Pancreas (tissue), 10 donors: ENCODE measurements at regions of chr1 and their contacts with region 1.

Region 1: GRCh38 chr1:200279810-200280411 is 129.9 kb downstream of the ZNF281 start:
- DNase-seq: peak in 5 of 6 donors; percentile 52 to 68 (median 63)
- ATAC-seq: peak; percentile 79 to 89 (median 82)
- H3K4me3 ChIP-seq: no peak overlapping the region
- H3K27ac ChIP-seq: no peak overlapping the region
- H3K4me1 ChIP-seq: peaks cover 0 to 11% (median 4%) of the 10 kb centered on the region in 3 donors
- H3K27me3 ChIP-seq: no peaks in the 10 kb centered on the region
- CTCF ChIP-seq: peak; percentile 56 to 75 (median 66)

Region 2: GRCh38 chr1:200493344-200493743 is 213.4 kb after region 1 on chr1:
- intact Hi-C with region 1: loop called in 1 of 3 experiments (anchors 10 kb)
- DNase-seq: no peak
- ATAC-seq: peak in 2 of 4 donors; percentile 21 to 45
- H3K4me3 ChIP-seq: no peak overlapping the region
- H3K27ac ChIP-seq: no peak overlapping the region
- H3K4me1 ChIP-seq: peaks cover 0 to 11% (median 10%) of the 10 kb centered on the region in 3 donors
- H3K27me3 ChIP-seq: no peaks in the 10 kb centered on the region
- CTCF ChIP-seq: no peak